Natural killer cell (primary cell): ENCODE measurements at regions of chr22 and their contacts with region 1.

Region 1: DNA sequence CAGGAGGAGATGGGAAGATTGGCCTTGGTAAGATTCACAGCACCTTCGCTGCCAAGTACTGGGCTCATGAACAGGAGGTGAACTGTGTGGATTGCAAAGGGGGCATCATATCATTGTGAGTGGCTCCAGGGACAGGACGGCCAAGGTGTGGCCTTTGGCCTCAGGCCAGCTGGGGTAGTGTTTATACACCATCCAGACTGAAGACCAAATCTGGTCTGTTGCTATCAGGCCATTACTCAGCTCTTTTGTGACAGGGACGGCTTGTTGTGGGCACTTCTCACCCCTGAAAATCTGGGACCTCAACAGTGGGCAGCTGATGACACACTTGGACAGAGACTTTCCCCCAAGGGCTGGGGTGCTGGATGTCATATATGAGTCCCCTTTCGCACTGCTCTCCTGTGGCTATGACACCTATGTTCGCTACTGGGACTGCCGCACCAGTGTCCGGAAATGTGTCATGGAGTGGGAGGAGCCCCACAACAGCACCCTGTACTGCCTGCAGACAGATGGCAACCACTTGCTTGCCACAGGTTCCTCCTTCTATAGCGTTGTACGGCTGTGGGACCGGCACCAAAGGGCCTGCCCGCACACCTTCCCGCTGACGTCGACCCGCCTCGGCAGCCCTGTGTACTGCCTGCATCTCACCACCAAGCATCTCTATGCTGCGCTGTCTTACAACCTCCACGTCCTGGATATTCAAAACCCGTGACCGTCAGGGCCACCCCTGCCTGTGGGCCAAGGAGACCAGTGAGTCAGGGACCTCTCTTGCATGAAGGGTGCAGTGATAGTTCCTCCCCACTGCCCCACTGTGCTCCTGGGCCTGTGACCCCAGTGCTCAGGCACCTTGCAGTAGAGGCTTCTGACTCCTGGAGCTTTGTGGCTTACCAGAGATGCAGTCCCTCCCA is 83.6 kb downstream of the BCR start:
- DNase-seq: peak; percentile 84 to 85
- ATAC-seq: peak; percentile 86 to 96 (median 90)
- H3K4me3 ChIP-seq: no peak overlapping the region
- H3K4me3 Mint-ChIP-seq: peak overlapping the region; percentile 29
- H3K27ac ChIP-seq: peak overlapping the region; percentile 96
- H3K27ac Mint-ChIP-seq: peak overlapping the region; percentile 89 to 92
- H3K4me1 ChIP-seq: peaks cover 35% of the 10 kb centered on the region
- H3K4me1 Mint-ChIP-seq: peaks cover 32 to 37% of the 10 kb centered on the region in 2 donors
- H3K27me3 ChIP-seq: no peaks in the 10 kb centered on the region
- H3K27me3 Mint-ChIP-seq: no peaks in the 10 kb centered on the region
- CTCF ChIP-seq: no peak

Region 2: DNA sequence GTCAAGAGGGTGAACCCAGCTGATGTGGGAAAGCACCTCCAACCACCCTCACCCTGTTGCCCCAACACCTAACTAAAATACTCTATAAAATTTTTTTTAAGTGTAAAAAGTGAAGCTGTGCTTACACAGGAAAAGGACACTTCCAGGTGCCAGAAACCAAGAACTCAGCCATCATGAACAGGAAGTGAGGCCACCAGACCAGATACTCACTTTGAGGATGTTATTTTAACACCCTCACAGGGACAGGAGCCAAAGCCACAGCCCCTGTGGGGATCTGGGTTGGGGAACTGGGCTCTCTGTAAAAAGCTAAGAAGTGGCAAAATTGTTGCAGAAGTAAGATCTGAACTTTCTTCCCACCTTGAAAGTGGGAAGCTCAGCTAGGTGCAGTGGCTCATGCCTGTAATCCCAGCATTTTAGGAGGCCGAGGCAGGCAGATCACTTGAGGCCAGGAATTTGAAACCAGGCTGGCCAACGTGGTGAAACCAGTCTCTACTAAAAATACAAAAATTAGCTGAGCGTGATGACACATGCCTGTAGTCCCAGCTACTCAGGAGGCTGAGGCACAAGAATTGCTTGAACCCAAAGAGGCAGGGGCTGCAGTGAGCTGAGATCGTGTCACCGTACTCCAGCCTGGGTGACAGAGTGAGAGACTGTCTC is 125.9 kb before region 1 on chr22:
- intact Hi-C with region 1: loop called (anchors 1 kb)
- DNase-seq: peak; percentile 70 to 87
- ATAC-seq: peak; percentile 62 to 85 (median 76)
- H3K4me3 ChIP-seq: no peak overlapping the region
- H3K4me3 Mint-ChIP-seq: peak overlapping the region; percentile 87
- H3K27ac ChIP-seq: peak overlapping the region; percentile 89
- H3K27ac Mint-ChIP-seq: peak overlapping the region; percentile 96 to 99
- H3K4me1 ChIP-seq: peaks cover 92% of the 10 kb centered on the region
- H3K4me1 Mint-ChIP-seq: peaks cover 37 to 72% of the 10 kb centered on the region in 2 donors
- H3K27me3 ChIP-seq: no peaks in the 10 kb centered on the region
- H3K27me3 Mint-ChIP-seq: no peaks in the 10 kb centered on the region
- CTCF ChIP-seq: no peak

Region 3: DNA sequence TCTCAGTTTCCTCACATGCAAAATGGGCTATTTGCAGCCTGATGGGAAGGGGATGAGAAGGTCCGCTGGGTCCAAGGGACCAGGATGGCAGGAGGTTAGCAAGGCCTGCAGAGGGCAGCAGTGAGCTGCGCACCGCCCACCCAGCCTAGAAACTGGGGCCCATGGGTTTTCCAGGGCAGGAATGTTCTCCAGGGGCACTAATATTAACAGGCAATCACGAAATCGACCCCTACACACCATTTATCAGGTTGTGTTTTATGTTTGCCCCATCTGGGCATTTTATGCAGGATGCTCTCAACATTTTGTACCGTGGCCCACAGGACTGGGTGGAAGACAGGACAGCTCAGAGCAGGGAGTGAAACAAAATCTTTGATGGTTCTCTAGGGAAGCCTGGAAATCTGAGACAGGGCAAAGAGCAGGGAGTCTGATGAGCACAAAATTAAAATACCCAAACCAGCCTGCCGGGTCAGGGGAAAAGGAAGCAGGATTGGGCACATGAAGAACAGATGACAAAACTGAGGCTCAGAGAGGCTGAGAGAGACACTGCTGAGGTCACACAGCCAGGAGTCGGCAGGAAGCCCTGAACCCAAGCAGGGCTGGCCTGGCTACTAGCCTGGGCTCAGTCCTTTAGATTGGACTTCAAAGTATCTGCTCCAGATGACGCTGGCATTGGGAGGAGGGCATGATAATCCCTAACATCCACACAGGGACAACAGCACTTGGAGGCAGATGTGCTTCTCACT is 85.2 kb before region 1 on chr22:
- intact Hi-C with region 1: loop called (anchors 1 kb)
- DNase-seq: peak; percentile 69 to 85
- ATAC-seq: peak; percentile 27 to 60 (median 42)
- H3K4me3 ChIP-seq: no peak overlapping the region
- H3K4me3 Mint-ChIP-seq: peak overlapping the region; percentile 78
- H3K27ac ChIP-seq: no peak overlapping the region
- H3K27ac Mint-ChIP-seq: peak overlapping the region; percentile 86 to 87
- H3K4me1 ChIP-seq: peaks cover 75% of the 10 kb centered on the region
- H3K4me1 Mint-ChIP-seq: peaks cover 57 to 61% of the 10 kb centered on the region in 2 donors
- H3K27me3 ChIP-seq: no peaks in the 10 kb centered on the region
- H3K27me3 Mint-ChIP-seq: no peaks in the 10 kb centered on the region
- CTCF ChIP-seq: peak; percentile 96

Region 4: DNA sequence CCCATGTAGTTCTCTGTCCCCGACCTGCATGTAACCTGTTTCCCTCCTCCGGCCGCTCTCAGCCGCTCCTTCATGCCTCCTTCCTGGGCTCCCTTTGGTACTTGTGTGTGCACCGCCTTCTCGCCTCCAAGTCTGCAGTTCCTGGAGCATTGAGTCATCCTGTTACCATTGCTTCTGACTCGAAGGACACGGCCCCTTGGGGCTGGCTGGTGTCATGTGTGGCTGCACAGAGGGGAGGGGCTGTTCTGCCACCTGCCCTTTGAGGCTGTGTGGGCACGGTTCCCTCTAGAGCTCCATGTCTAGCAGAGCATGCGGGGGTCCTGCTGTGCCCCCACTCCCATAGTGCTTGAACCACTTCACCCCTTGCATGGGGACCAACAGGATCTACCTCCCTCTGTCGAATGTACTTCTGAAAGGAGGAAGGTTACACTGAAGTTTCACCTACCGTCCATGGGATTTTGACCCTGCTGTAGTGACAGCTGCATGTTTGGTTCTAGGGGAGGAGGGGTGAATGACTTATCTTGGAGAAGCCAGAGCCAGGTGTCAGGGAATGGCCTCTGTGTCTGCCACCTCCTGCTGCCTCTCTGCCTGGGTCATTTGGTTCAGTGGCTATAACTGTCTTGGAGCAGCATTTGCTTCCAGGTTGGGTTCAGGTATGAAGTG is 44.0 kb before region 1 on chr22:
- intact Hi-C with region 1: loop called (anchors 1 kb)
- DNase-seq: peak; percentile 54 to 55
- ATAC-seq: peak; percentile 58 to 80 (median 63)
- H3K4me3 ChIP-seq: no peak overlapping the region
- H3K4me3 Mint-ChIP-seq: peak overlapping the region; percentile 88
- H3K27ac ChIP-seq: peak overlapping the region; percentile 32
- H3K27ac Mint-ChIP-seq: peak overlapping the region; percentile 92 to 96
- H3K4me1 ChIP-seq: peaks cover 93% of the 10 kb centered on the region
- H3K4me1 Mint-ChIP-seq: peaks cover 97 to 99% of the 10 kb centered on the region in 2 donors
- H3K27me3 ChIP-seq: no peaks in the 10 kb centered on the region
- H3K27me3 Mint-ChIP-seq: no peaks in the 10 kb centered on the region
- CTCF ChIP-seq: no peak

Region 5: DNA sequence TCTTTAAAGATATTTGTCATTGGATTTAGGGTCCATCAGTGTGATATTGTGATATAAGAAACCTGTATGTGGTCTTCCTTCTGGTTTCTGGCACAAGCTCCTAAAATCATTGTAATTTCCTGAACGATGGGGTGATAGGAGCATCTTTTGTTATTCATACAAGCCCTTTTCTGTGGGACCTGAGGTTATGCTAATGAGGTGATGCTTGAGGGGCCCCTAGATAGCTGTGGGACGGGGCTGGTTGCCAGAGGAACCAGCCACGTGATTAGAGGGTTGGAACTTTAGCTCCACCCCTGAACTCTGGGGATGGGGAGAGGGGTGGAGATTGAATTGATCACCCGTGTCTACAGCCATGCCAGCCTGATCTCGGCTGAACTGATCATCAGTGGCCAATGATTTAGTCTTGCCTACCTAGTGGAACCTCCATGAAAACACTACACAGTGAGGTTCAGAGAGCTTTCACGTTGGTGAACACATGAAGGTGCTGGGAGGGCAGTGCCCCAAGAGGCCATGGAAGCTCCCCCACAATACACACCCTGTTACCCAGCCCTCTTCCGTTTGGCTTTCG is 20.8 kb before region 1 on chr22:
- intact Hi-C with region 1: loop called (anchors 1 kb)
- DNase-seq: peak; percentile 36 to 88
- ATAC-seq: peak; percentile 66 to 74 (median 67)
- H3K4me3 ChIP-seq: no peak overlapping the region
- H3K4me3 Mint-ChIP-seq: peak overlapping the region; percentile 81
- H3K27ac ChIP-seq: peak overlapping the region; percentile 44
- H3K27ac Mint-ChIP-seq: peak overlapping the region; percentile 83 to 93
- H3K4me1 ChIP-seq: peaks cover 93% of the 10 kb centered on the region
- H3K4me1 Mint-ChIP-seq: peaks cover 89 to 92% of the 10 kb centered on the region in 2 donors
- H3K27me3 ChIP-seq: no peaks in the 10 kb centered on the region
- H3K27me3 Mint-ChIP-seq: no peaks in the 10 kb centered on the region
- CTCF ChIP-seq: no peak

Region 6: GRCh38 chr22:23250056-23250784 is 13.7 kb before region 1 on chr22:
- intact Hi-C with region 1: loop called (anchors 1 kb)
- DNase-seq: peak in 1 of 2 donors; percentile 30
- ATAC-seq: peak in 2 of 3 donors; percentile 45 to 50
- H3K4me3 ChIP-seq: no peak overlapping the region
- H3K4me3 Mint-ChIP-seq: peak overlapping the region; percentile 75
- H3K27ac ChIP-seq: peak overlapping the region; percentile 31
- H3K27ac Mint-ChIP-seq: peak overlapping the region; percentile 84
- H3K4me1 ChIP-seq: peaks cover 53% of the 10 kb centered on the region
- H3K4me1 Mint-ChIP-seq: peaks cover 55 to 57% of the 10 kb centered on the region in 2 donors
- H3K27me3 ChIP-seq: no peaks in the 10 kb centered on the region
- H3K27me3 Mint-ChIP-seq: no peaks in the 10 kb centered on the region
- CTCF ChIP-seq: no peak

Region 7: DNA sequence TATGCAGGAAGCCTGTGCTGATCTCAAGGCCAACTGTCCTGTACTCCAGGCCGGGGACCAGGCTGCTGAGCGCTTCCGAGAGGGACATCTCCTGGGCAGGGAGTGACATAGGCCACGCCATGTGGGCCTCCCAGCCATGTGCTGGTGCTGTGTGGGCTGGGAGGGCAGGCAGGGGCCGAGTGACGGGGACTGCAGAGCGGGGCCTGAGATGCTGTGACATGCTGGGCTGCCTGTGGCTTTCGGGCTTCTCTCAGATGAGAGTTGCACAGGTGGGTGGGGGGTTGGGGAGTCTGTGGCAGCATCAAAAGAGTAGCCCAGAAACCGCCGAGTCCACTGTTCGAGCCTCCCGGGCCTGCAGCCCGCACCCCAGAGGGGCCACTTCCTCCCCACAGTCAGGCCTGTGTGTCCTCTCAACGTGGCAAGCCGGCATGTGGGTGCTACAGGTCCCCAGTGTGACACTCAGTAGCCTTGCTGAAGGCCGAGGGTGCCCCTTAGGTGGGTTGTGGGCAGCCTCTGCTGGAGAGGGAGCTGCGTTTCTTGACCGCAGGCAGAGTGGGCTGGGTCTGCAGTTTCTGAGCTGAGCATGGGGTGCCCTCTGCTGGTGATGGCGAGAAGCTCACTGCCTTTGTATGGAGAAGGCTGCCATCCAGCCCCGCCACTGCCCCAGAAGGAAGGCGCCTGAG is 17.6 kb after region 1 on chr22:
- intact Hi-C with region 1: loop called (anchors 1 kb)
- DNase-seq: peak; percentile 86 to 90
- ATAC-seq: peak; percentile 69 to 82 (median 72)
- H3K4me3 ChIP-seq: no peak overlapping the region
- H3K4me3 Mint-ChIP-seq: peak overlapping the region; percentile 4
- H3K27ac ChIP-seq: peak overlapping the region; percentile 38
- H3K27ac Mint-ChIP-seq: peak overlapping the region; percentile 82 to 87
- H3K4me1 ChIP-seq: peaks cover 60% of the 10 kb centered on the region
- H3K4me1 Mint-ChIP-seq: peaks cover 32 to 52% of the 10 kb centered on the region in 2 donors
- H3K27me3 ChIP-seq: no peaks in the 10 kb centered on the region
- H3K27me3 Mint-ChIP-seq: no peaks in the 10 kb centered on the region
- CTCF ChIP-seq: peak; percentile 98